Mammary epithelial cell (primary cell): ENCODE measurements at regions of chr16 and their contacts with region 1.

Region 1: DNA sequence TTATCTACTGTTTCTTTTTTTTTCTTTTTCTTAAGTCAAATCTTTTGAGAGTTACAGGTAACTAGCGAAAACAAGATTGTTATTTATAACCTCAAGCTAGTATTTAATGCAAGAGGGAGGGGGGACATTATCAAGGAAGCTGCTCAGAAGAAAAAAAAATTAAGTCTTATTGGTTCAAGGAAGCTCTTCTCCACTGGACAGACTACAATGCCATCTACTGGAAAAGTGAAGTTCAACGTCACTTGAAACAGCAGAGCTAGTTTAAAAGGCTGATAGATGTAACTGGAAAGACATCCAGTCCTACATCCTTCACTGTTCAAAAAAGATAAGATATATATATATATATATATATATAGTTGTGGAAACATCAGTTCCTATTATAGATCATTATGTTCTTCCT is 418.0 kb upstream of the PSMD7 start:
- DNase-seq: peak; percentile 35
- H3K4me3 ChIP-seq: no peak overlapping the region
- H3K27ac ChIP-seq: no peak overlapping the region
- H3K4me1 ChIP-seq: no peaks in the 10 kb centered on the region
- H3K27me3 ChIP-seq: peaks cover 3% of the 10 kb centered on the region
- CTCF ChIP-seq: peak; percentile 33 to 75

Region 2: GRCh38 chr16:72124761-72125634 is 1753.6 kb before region 1 on chr16:
- CTCF ChIA-PET with region 1: no interaction called
- dilution Hi-C with region 1: no loop called
- in situ Hi-C with region 1: no loop called
- intact Hi-C with region 1: loop called (anchors 2 kb)
- DNase-seq: peak; percentile 51
- H3K4me3 ChIP-seq: no peak overlapping the region
- H3K27ac ChIP-seq: no peak overlapping the region
- H3K4me1 ChIP-seq: no peaks in the 10 kb centered on the region
- H3K27me3 ChIP-seq: no peaks in the 10 kb centered on the region
- CTCF ChIP-seq: peak; percentile 74 to 84

Region 3: GRCh38 chr16:72501739-72502593 is 1376.6 kb before region 1 on chr16:
- CTCF ChIA-PET with region 1: no interaction called
- dilution Hi-C with region 1: no loop called
- in situ Hi-C with region 1: no loop called
- intact Hi-C with region 1: loop called (anchors 2 kb)
- DNase-seq: peak; percentile 39
- H3K4me3 ChIP-seq: no peak overlapping the region
- H3K27ac ChIP-seq: no peak overlapping the region
- H3K4me1 ChIP-seq: no peaks in the 10 kb centered on the region
- H3K27me3 ChIP-seq: no peaks in the 10 kb centered on the region
- CTCF ChIP-seq: peak; percentile 84 to 91

Region 4: DNA sequence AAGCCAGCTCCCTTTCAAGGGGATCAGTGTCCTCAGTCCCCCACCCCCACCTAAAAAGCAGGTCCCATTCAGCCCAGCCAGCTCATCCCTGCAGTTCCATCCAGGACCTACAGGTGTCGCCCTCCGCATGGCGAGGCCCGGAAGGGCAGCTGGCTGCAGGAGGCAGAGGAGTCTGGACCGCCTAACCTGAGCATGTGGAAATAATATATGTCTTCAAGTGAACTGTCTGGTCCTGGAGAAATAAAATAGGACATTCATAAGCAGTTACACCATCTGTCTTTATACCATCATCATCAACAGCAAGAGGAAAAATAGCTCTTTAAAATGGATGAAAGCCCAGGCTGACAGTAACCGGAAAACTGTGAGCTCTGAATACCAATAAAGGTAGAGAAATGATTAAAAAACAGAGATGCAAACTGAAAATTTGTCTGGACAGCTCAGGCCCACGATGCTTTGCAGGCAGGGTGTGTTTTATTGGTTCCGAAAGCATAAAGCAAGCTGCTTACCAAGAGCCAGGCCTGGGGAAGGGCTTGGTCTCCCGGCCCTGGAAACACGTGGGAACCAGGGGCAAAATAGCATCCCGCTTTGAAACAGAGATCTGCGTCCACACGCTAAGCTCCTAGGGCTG is 1045.9 kb before region 1 on chr16:
- CTCF ChIA-PET with region 1: no interaction called
- dilution Hi-C with region 1: no loop called
- in situ Hi-C with region 1: no loop called
- intact Hi-C with region 1: loop called (anchors 5 kb)
- DNase-seq: peak; percentile 52
- H3K4me3 ChIP-seq: no peak overlapping the region
- H3K27ac ChIP-seq: no peak overlapping the region
- H3K4me1 ChIP-seq: peaks cover 6% of the 10 kb centered on the region
- H3K27me3 ChIP-seq: no peaks in the 10 kb centered on the region
- CTCF ChIP-seq: peak; percentile 98 to 99

Region 5: GRCh38 chr16:73196670-73197069 is 681.9 kb before region 1 on chr16:
- CTCF ChIA-PET with region 1: no interaction called
- dilution Hi-C with region 1: no loop called
- in situ Hi-C with region 1: no loop called
- intact Hi-C with region 1: loop called (anchors 10 kb)
- DNase-seq: peak; percentile 43
- H3K4me3 ChIP-seq: no peak overlapping the region
- H3K27ac ChIP-seq: no peak overlapping the region
- H3K4me1 ChIP-seq: no peaks in the 10 kb centered on the region
- H3K27me3 ChIP-seq: no peaks in the 10 kb centered on the region
- CTCF ChIP-seq: peak; percentile 81 to 87

Region 6: DNA sequence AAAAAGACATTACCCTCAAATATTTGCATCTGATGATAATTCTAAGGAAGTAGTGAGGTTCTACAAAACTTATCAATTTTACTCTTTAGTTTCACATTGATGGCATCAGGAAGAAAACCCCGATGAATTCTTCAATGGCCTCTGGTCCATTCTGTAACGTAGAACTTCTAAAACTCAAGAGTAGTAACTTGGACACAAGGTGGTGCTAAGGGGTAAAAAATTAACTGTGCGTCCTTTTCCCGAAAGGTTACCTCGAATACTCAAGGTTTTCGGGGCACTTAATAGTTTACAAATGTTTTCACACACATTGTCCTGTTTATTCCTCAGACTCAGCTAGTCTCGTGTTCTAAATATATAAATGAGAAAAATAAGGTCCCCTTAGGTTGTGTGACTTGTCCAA is 313.3 kb before region 1 on chr16:
- CTCF ChIA-PET with region 1: no interaction called
- dilution Hi-C with region 1: no loop called
- in situ Hi-C with region 1: no loop called
- intact Hi-C with region 1: loop called (anchors 5 kb)
- DNase-seq: no peak
- H3K4me3 ChIP-seq: no peak overlapping the region
- H3K27ac ChIP-seq: no peak overlapping the region
- H3K4me1 ChIP-seq: no peaks in the 10 kb centered on the region
- H3K27me3 ChIP-seq: no peaks in the 10 kb centered on the region
- CTCF ChIP-seq: peak in 1 of 2 donors; percentile 24

Region 7: DNA sequence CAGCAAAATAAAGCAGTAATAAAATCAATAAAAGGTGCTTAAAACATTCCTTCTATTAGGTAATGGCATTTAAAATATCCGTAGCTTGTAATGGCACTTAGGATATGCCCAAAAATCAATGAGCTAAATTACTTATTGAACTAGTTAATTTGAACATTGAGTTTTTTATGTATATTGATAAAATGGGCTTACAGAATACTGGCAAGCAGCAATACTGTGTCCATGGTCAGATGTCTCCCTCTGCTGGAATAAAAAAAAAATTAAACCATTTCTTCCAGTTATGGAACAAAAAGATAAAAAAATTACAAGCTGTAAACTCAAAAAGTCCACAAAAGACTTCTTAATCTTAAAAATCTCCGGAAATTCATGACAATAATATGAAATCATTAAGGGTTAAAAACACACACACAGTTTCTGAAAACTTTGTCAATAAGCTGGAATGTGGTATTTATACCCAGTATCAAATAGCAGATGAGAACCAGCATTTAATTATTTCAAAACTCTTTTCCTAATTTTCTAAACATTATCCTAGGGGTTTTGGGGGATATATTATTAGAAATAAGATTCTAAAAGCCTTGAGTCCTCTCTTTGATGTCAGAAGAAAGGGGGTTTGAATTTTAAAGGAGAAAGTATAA is 396.5 kb after region 1 on chr16:
- CTCF ChIA-PET with region 1: interaction called, 6 read pairs
- dilution Hi-C with region 1: no loop called
- in situ Hi-C with region 1: no loop called
- intact Hi-C with region 1: loop called (anchors 10 kb)
- DNase-seq: no peak
- H3K4me3 ChIP-seq: no peak overlapping the region
- H3K27ac ChIP-seq: no peak overlapping the region
- H3K4me1 ChIP-seq: no peaks in the 10 kb centered on the region
- H3K27me3 ChIP-seq: no peaks in the 10 kb centered on the region
- CTCF ChIP-seq: peak; percentile 42 to 65